IMR-90 (cell line): ENCODE measurements at regions of chr11 and their contacts with region 1.

Region 1: GRCh38 chr11:68206187-68206601 is 6.9 kb downstream of the KMT5B start:
- DNase-seq: peak; percentile 69
- ATAC-seq: peak; percentile 73
- H3K4me3 ChIP-seq: no peak overlapping the region
- H3K27ac ChIP-seq: no peak overlapping the region
- H3K4me1 ChIP-seq: peaks cover 8% of the 10 kb centered on the region
- H3K27me3 ChIP-seq: no peaks in the 10 kb centered on the region
- CTCF ChIP-seq: peak; percentile 79
- POLR2A ChIP-seq: no peak
- RAD21 ChIP-seq: peak; percentile 65

Region 2: GRCh38 chr11:68010090-68011041 is 195.8 kb before region 1 on chr11 and contains the start of gene ALDH3B1:
- CTCF ChIA-PET with region 1: no interaction called
- POLR2A ChIA-PET with region 1: no interaction called
- dilution Hi-C with region 1: no loop called
- in situ Hi-C with region 1: no loop called
- intact Hi-C with region 1: loop called (anchors 5 kb)
- DNase-seq: peak; percentile 70
- ATAC-seq: peak; percentile 59
- H3K4me3 ChIP-seq: peak within 1 kb of the TSS; percentile 42
- H3K27ac ChIP-seq: peak within 1 kb of the TSS; percentile 88
- H3K4me1 ChIP-seq: peaks cover 44% of the 10 kb centered on the region
- H3K27me3 ChIP-seq: no peaks in the 10 kb centered on the region
- CTCF ChIP-seq: 0 out of 2 replicates have a peak, but pooled peaks have one; percentile 9
- POLR2A ChIP-seq: peak; percentile 32
- RAD21 ChIP-seq: no peak
- total RNA-seq, gene ALDH3B1: 11.8 and 11.9 TPM in 2 replicates

Region 3: DNA sequence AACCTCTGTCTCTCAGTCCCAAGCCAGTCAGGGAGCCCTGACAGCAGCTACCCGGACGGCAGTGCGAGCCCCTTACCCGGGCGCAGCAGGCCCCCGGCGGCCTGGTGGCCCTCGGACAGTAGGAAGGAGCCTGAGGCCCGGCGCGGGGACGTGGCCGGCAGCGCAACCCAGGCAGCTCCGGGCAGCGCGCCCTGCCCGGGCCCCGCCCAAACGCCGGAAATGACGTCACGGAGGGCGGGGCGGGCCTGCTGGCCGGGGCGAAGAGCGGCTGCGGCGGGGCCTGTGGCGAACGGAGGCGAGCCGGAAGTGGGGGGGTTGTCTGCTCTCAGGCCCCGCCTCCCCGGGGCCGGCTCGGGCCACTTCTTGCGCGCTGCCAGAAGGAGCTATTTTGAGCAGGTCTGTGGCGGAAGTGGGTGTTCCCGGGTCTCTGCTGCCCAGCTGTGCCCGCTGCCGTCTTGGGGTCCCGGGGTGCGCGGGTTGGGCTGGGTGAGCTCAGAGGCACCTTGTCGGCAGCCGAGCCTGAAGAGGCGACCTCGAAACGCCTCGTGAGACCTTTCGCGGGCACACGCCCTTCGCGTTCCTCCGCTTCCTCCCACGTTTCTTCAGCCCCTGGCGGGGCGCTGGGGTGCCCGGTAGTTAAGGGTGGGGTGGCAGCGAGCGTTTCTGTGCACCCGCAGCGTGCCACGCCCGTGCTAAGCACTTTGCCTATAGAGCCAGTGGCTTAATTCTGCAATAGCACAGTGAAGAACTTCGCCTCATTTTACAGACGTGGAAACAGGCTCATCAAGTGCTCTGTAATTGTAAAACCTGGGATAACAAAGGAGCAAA is 65.8 kb after region 1 on chr11 and contains the start of gene C11orf24:
- CTCF ChIA-PET with region 1: no interaction called
- POLR2A ChIA-PET with region 1: no interaction called
- dilution Hi-C with region 1: no loop called
- in situ Hi-C with region 1: no loop called
- intact Hi-C with region 1: no loop called
- DNase-seq: peak; percentile 91
- ATAC-seq: peak; percentile 91
- H3K4me3 ChIP-seq: peak within 1 kb of the TSS; percentile 94
- H3K27ac ChIP-seq: peak within 1 kb of the TSS; percentile 97
- H3K4me1 ChIP-seq: peaks cover 10% of the 10 kb centered on the region
- H3K27me3 ChIP-seq: no peaks in the 10 kb centered on the region
- CTCF ChIP-seq: no peak
- POLR2A ChIP-seq: peak; percentile 96
- RAD21 ChIP-seq: no peak
- total RNA-seq, gene C11orf24: 41.1 and 42.5 TPM in 2 replicates

Region 4: GRCh38 chr11:68889948-68890446 is 683.8 kb after region 1 on chr11:
- CTCF ChIA-PET with region 1: no interaction called
- POLR2A ChIA-PET with region 1: no interaction called
- dilution Hi-C with region 1: no loop called
- in situ Hi-C with region 1: no loop called
- intact Hi-C with region 1: no loop called
- DNase-seq: peak; percentile 70
- ATAC-seq: peak; percentile 74
- H3K4me3 ChIP-seq: no peak overlapping the region
- H3K27ac ChIP-seq: no peak overlapping the region
- H3K4me1 ChIP-seq: peaks cover 3% of the 10 kb centered on the region; the same call in 1 of the 2 replicates
- H3K27me3 ChIP-seq: no peaks in the 10 kb centered on the region
- CTCF ChIP-seq: peak; percentile 44
- POLR2A ChIP-seq: no peak
- RAD21 ChIP-seq: peak; percentile 57